ENCODE measurements at regions of chr16 and their contacts with region 1.

Region 1: GRCh38 chr16:84548971-84549844 is 44.7 kb upstream of the MEAK7 start:
- DNase-seq: peak; percentile 63
- ATAC-seq: peak; percentile 48
- H3K4me3 Mint-ChIP-seq: peak overlapping the region; percentile 87
- H3K27ac Mint-ChIP-seq: peak overlapping the region; percentile 92
- H3K4me1 Mint-ChIP-seq: peaks cover 47% of the 10 kb centered on the region
- H3K27me3 Mint-ChIP-seq: no peaks in the 10 kb centered on the region

Region 2: DNA sequence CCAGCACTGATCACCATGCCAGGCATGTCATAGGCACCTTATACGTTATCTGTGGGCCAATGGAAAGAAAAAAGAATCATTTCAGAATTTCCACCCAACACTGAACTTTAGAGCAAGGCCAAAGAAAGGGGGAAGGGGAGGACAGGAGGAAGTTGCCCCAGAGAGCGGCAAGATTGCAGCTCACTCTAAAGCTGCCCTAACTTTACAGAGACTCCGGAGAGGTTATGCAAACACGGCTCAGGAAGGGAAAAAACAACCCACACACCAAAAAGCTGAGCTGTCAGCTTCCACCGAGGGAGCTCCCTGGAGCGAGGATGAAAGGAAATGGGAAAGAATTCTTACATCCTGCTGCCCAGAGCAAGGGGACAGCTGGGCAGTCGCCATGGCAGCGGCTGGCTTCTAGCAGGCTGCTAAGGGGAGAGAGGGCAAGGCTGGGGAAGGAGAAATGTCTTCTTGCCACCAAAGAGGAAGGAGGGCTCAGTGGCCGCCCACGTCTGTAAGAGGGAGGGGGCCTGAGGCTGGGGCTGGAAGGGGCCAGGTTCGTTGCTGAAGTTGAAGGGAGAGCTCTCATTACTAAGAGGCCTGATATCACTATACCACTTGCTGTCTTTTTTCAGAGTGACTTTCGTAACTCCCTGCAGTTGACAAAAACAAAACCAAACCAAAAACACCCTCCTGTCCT is 50.5 kb after region 1 on chr16:
- POLR2A ChIA-PET with region 1: interaction called, 78 read pairs
- DNase-seq: peak; percentile 63
- ATAC-seq: peak; percentile 37
- H3K4me3 Mint-ChIP-seq: peak overlapping the region; percentile 80
- H3K27ac Mint-ChIP-seq: peak overlapping the region; percentile 92
- H3K4me1 Mint-ChIP-seq: peaks cover 75% of the 10 kb centered on the region
- H3K27me3 Mint-ChIP-seq: no peaks in the 10 kb centered on the region

Region 3: DNA sequence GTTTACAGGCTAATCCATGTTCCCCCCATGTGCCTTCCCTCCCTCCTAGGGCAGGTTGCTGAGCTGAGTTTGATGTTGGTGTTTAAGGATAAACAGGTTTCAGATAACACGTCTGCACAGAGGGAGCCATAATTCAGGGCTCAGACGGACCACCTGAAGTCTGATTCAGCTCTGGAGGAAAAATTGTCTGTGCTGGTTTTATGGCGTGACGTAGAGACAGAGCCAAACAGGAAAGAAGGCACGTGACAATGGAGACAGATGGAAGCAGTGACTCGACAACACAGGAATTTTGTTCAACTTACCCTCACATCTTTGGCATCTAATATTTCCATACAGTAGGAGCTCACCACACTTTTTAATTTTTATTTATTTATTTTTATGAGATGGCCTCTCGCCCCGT is 139.9 kb after region 1 on chr16:
- POLR2A ChIA-PET with region 1: no interaction called
- DNase-seq: no peak
- ATAC-seq: no peak
- H3K4me3 Mint-ChIP-seq: no peak overlapping the region
- H3K27ac Mint-ChIP-seq: no peak overlapping the region
- H3K4me1 Mint-ChIP-seq: peaks cover 11% of the 10 kb centered on the region
- H3K27me3 Mint-ChIP-seq: peaks cover 16% of the 10 kb centered on the region